Head of caudate nucleus (tissue), 42 donors: ENCODE measurements at regions of chr16 and their contacts with region 1.

Region 1: DNA sequence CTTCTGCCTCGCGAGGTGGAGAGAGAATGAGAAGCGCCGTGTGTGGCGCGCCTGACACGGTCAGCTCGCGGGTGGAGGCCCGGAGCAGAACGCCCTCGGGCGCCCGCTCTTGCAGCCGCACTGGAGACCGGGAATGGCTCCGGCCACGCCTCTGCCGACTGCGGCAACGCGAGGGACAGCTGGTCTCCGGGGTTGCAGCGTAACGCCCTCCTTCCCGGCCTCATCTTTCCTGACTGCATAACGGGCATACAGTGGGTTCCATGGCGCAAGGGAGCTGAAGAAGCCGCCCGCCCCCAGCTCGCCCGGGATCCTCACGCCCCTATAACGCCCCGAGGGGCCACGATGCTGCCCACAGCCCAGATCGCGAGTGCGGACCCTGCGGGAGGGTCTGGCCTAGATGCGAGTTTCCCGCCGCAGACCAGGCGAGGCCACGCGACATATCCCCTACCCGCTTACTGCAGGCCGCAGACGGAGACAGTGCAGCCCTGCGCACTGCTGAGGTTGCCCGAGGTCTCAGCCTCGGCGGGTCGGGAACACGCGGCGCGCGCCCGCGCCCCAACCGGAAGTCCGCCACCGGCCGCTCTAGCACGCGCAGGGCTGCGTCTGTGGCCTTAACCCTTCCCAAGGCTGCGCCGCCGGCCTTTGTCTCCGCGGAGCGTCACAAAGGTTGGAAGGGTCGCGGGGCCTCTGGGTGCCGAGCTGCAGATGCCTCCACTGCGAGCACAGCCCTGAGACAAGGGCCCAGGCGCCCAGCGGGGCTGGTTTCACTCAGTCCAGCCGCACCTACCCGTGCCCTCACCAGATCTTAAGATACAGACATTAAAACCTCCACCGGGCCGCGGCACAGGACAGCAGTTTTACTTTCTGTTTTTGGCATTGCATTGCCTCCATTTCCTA is 18.8 kb downstream of the BCL7C start:
- DNase-seq: peak; percentile 78 to 97 (median 93)

Region 2: DNA sequence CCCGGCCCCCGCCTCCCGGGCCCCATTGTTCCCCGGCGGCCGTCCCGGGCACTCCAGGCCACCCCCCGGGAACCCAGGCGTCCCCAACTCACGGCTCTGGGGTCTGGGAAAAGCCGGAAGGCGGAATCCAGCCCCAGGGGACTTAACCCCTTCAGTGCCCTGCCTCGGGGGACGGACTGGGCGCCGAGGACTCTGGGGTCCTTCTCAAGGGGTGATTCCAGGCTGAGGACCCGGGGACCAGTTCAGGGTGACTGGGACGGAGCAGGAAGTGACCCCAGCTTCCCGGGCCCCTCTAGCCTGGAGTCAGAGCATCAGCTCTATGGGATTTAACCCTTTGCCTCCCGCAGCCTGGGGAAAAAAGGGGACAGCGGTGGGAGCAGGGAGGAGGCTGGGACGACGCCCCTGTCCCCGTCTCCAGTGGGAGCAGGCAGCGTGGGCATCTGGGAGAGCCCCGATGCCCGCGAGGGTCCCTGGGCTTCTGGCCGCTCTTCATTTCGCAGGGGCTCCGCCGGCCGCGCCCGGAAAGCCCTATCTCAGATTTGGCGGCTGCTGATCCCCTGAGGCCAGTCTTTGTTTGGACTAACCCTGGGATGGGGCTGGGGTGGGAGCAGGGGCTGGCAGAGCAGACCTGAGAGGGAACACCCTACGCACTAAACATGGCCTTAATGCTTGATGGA is 88.0 kb before region 1 on chr16 and contains the start of gene ZNF629:
- intact Hi-C with region 1: loop called (anchors 5 kb)
- DNase-seq: peak; percentile 65 to 94 (median 84)

Region 3: DNA sequence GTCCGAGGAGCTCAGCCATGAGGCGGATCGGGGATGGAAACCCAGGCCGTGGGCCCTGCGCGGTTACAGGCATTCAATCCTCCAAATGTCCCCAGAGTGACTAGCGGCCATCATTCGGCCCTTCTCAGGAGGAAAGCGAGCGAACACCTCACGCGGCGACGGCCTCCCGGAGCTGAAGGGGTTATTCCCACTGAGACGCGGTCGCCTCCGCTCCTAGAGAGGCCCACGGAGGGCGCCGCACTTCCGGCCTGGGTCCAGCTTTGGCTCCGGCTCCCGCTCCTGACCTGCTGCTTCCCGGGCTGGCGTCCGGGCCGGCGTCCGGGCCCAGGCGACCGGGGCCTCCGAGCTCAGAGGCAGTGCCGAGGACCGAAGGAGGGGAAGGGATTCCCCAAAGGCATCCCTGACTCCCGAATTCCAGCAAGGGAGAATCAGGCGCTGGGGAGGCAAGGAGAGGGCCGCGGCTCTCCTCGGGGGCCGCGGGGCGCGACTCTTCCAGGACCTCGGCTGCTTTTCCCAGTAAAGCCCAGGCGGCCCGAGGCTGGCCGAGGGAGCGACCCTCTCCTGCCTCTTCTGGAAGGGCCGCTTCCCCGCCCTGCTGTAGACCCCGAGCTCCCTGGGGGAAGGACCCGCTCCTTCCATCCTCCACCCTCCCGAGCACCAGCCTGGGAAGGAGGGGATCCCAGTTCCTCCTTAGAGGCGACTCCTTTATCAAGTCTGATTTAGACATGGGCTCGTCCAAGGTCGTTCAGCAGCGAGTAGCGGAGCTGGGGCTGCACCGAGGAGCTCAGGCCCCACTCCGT is 69.5 kb before region 1 on chr16:
- intact Hi-C with region 1: loop called (anchors 5 kb)
- DNase-seq: peak; percentile 70 to 96 (median 90)

Region 4: DNA sequence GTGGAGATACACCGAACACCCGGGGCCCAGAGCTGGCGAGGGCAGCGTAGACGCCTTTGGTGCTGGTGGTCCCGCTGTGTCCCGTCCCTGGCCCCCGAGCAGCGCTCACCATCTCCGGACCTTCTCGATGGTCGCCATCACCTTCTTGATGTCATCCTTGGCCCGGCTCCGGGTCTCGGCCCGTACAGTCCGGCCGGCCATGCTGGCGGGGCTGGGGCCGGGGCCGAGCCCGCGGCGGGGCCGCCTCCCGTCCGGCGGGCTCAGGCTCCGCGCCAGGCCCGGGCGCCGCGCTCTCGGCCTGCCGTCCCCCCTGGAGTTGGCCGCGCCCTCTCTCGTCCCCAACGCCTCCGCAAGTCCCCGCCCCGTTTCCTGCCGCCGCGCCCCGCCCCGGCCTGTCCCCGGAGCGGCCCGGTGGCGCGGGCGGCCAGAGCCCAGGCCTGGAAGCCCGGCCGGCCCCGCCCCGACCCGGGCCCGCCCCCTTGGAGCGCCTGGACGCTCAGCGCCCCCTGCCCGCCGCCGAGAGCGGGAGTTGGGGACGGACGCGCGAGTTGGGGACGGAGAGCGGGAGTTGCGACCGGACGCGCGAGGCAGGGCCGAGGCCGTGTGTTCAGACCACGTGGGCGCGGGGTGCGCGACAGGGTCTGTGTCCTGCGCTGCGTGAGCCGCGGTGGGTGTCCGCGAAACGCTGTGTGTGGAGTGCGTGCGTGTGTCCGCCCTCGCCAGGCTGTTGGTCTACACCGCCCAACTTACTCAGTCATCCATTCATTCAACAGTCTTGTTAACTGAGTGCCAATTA is 18.9 kb after region 1 on chr16 and contains the start of gene BCL7C:
- intact Hi-C with region 1: loop called (anchors 2 kb)
- DNase-seq: peak; percentile 36 to 94 (median 88)

Region 5: GRCh38 chr16:30948667-30949649 is 73.9 kb after region 1 on chr16 and contains the start of gene ORAI3:
- intact Hi-C with region 1: no loop called
- DNase-seq: peak; percentile 37 to 90 (median 77)